CD8-positive, alpha-beta T cell (primary cell): ENCODE measurements at regions of chr6 and their contacts with region 1.

Region 1: DNA sequence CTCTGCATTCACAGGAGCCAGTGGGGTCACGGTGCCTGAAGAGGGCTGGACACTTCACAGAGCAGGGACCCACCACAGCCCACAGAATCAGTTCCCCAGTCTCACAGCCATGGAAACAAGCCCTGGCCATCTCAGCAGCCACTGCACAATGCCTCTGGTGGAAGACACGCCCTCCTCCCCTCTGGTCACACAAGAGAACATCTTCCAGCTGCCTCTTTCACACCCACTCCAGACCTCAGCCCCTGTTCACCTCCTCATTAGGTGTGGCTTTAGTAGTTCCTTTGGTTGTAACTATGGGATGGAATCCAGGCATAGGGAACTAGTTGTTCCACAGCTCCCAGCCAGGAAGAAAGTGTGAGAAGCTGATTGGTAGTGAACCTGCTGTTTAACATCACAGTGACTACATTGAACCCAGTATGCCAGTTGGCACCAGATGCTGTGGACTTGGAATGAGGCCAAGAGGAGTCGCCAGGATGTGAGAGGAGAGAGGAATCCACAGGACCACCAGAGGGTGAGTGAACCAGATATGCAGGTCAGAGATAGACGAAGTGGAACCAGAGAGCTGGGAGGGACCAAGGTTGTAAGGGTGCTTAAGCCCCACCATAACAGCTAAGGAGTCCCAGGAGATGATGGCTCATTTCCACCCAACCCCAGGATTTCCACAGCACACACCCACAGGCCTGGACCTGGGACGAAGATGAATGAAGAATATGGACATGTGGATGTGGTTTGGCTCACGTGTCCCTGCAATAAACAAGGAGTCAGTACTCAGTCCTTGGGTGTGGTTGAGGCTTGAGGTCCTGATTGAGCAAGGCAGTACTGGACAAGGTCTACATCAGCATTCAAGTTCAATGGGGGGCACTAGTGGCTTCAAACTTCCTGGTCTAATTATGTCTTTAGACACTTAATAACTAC is 8.8 kb upstream of the BTN3A3 start:
- DNase-seq: no peak
- ATAC-seq: no peak
- H3K4me3 ChIP-seq: no peak overlapping the region
- H3K4me3 Mint-ChIP-seq: no peak overlapping the region
- H3K27ac ChIP-seq: no peak overlapping the region
- H3K27ac Mint-ChIP-seq: no peak overlapping the region
- H3K4me1 ChIP-seq: no peaks in the 10 kb centered on the region
- H3K4me1 Mint-ChIP-seq: no peaks in the 10 kb centered on the region
- H3K27me3 ChIP-seq: no peaks in the 10 kb centered on the region
- H3K27me3 Mint-ChIP-seq: no peaks in the 10 kb centered on the region
- CTCF ChIP-seq: no peak

Region 2: DNA sequence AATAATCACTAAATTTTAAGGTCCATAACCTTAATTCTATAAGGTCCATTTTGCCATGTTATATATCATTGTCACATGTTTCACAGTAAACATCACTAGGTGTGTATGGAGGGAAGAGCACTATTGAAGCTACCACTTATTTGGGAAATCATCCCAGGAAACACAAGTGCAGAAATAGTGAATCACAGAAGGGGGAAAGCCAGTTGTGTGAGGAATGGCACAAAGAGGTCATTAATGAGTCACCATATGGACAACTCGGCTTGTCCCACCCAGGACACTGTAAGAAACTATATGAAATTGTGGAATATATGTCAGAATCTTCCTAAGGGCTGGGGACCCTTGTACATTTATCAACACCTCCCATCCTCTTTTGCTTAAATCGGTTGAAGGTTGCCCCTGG is 15.7 kb before region 1 on chr6:
- CTCF ChIA-PET with region 1: no interaction called
- POLR2A ChIA-PET with region 1: no interaction called
- intact Hi-C with region 1: loop called in 1 of 2 experiments (anchors 2 kb)
- DNase-seq: no peak
- ATAC-seq: no peak
- H3K4me3 ChIP-seq: no peak overlapping the region
- H3K4me3 Mint-ChIP-seq: no peak overlapping the region
- H3K27ac ChIP-seq: no peak overlapping the region
- H3K27ac Mint-ChIP-seq: peak overlapping the region; percentile 17
- H3K4me1 ChIP-seq: peaks cover 3% of the 10 kb centered on the region
- H3K4me1 Mint-ChIP-seq: peaks cover 4% of the 10 kb centered on the region
- H3K27me3 ChIP-seq: no peaks in the 10 kb centered on the region
- H3K27me3 Mint-ChIP-seq: no peaks in the 10 kb centered on the region
- CTCF ChIP-seq: no peak

Region 3: GRCh38 chr6:26607434-26608230 is 176.1 kb after region 1 on chr6:
- CTCF ChIA-PET with region 1: no interaction called
- POLR2A ChIA-PET with region 1: no interaction called
- intact Hi-C with region 1: no loop called
- DNase-seq: peak in 7 of 9 experiments; percentile 37 to 78 (median 64)
- ATAC-seq: peak; percentile 98
- H3K4me3 ChIP-seq: peak overlapping the region in 1 of 2 experiments; percentile 16
- H3K4me3 Mint-ChIP-seq: peak overlapping the region; percentile 70
- H3K27ac ChIP-seq: no peak overlapping the region
- H3K27ac Mint-ChIP-seq: peak overlapping the region; percentile 3
- H3K4me1 ChIP-seq: no peaks in the 10 kb centered on the region
- H3K4me1 Mint-ChIP-seq: peaks cover 10% of the 10 kb centered on the region
- H3K27me3 ChIP-seq: no peaks in the 10 kb centered on the region
- H3K27me3 Mint-ChIP-seq: peaks cover 6% of the 10 kb centered on the region
- CTCF ChIP-seq: peak; percentile 72